H1 (cell line): ENCODE measurements at regions of chr1 and their contacts with region 1.

Region 1: DNA sequence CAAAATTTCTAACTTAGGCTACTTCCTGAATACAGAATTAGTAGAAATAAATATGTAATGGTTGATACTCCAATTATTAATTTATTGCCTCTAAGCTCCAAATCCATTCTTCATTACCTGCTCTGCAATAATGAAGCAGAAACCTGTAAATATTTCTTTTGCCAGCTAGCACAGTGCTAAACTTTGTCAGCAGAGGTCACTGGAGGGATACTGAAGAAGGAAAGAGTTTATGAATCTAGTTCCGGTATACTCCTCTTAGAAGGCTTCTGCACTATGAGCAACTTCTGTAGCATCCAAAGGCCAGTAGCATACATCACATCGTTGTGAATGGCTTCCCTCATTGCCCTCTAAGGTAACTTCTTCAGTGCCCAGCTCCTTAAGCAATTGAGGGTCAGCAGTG is 81.0 kb upstream of the LHX8 start:
- DNase-seq: no peak
- H3K4me3 ChIP-seq: no peak overlapping the region
- H3K27ac ChIP-seq: no peak overlapping the region
- H3K4me1 ChIP-seq: no peaks in the 10 kb centered on the region
- H3K27me3 ChIP-seq: no peaks in the 10 kb centered on the region
- CTCF ChIP-seq: peak in 2 of 3 experiments; percentile 58 to 64; a peak in 3 of 4 replicates
- EP300 ChIP-seq: no peak
- POLR2A ChIP-seq: no peak
- RAD21 ChIP-seq: peak; percentile 88

Region 2: DNA sequence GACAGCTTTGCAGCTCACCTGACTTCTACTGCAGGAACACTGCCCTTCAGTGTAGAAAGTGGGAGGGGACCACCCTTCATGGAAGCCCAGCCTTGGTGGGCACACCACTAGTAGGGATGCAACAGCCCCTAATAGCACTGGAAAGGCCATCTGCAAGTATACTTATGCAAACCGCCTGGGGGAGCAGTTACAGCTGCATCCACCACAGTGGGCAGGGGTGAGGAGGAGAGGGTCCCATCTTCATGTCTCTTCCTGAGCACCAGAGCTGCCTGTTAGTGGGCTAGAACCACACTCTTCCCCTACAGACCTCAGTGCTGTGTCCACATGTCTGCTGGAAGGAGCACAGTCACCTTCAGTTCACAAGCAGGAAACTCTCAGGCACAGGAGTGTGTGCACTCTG is 14.8 kb after region 1 on chr1:
- CTCF ChIA-PET with region 1: interaction called, 41 read pairs
- POLR2A ChIA-PET with region 1: no interaction called
- DNase-seq: no peak
- H3K4me3 ChIP-seq: no peak overlapping the region
- H3K27ac ChIP-seq: no peak overlapping the region
- H3K4me1 ChIP-seq: no peaks in the 10 kb centered on the region; a peak in 2 of 7 replicates
- H3K27me3 ChIP-seq: no peaks in the 10 kb centered on the region
- CTCF ChIP-seq: peak; percentile 30 to 50 (median 36)
- EP300 ChIP-seq: no peak
- POLR2A ChIP-seq: no peak
- RAD21 ChIP-seq: peak; percentile 31 to 54; a peak in 3 of 4 replicates

Region 3: DNA sequence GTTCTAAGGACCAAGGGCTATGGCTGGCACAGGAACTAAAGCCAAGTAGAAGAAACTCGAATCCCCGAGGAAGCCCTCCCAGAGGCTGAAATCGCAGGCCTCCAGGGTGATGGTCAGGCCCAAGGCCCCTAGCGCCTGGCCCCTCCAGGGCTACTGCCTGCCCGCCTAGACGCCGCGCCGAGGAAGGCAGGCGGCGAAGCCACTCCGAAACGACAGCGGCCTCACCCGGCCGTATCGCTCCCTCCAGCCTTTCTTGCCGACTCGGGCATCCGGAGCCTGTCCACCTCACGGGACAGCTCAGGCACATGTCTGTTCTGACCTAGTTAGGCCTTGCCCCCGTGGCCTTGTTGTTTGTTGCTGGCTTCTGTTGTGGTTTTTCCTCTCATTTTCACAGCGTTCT is 71.3 kb after region 1 on chr1:
- CTCF ChIA-PET with region 1: interaction called, 23 read pairs
- POLR2A ChIA-PET with region 1: no interaction called
- DNase-seq: peak in 1 of 2 experiments; percentile 51
- H3K4me3 ChIP-seq: no peak overlapping the region
- H3K27ac ChIP-seq: no peak overlapping the region
- H3K4me1 ChIP-seq: peaks cover 0 to 3% (median 1%) of the 10 kb centered on the region in 4 experiments; a peak in 3 of 7 replicates
- H3K27me3 ChIP-seq: peaks cover 13 to 29% (median 27%) of the 10 kb centered on the region in 4 experiments
- CTCF ChIP-seq: peak; percentile 23 to 30 (median 27); a peak in 3 of 4 replicates
- EP300 ChIP-seq: no peak
- POLR2A ChIP-seq: no peak
- RAD21 ChIP-seq: peak; percentile 44 to 51

Region 4: GRCh38 chr1:75172556-75172955 is 119.3 kb after region 1 on chr1:
- CTCF ChIA-PET with region 1: interaction called, 21 read pairs
- POLR2A ChIA-PET with region 1: no interaction called
- DNase-seq: no peak
- H3K4me3 ChIP-seq: no peak overlapping the region
- H3K27ac ChIP-seq: no peak overlapping the region
- H3K4me1 ChIP-seq: no peaks in the 10 kb centered on the region
- H3K27me3 ChIP-seq: no peaks in the 10 kb centered on the region
- CTCF ChIP-seq: no peak
- EP300 ChIP-seq: no peak
- POLR2A ChIP-seq: no peak
- RAD21 ChIP-seq: no peak

Region 5: GRCh38 chr1:75208862-75209261 is 155.7 kb after region 1 on chr1:
- CTCF ChIA-PET with region 1: interaction called, 92 read pairs
- POLR2A ChIA-PET with region 1: no interaction called
- DNase-seq: no peak
- H3K4me3 ChIP-seq: no peak overlapping the region
- H3K27ac ChIP-seq: no peak overlapping the region
- H3K4me1 ChIP-seq: no peaks in the 10 kb centered on the region
- H3K27me3 ChIP-seq: no peaks in the 10 kb centered on the region
- CTCF ChIP-seq: no peak
- EP300 ChIP-seq: no peak
- POLR2A ChIP-seq: no peak
- RAD21 ChIP-seq: no peak